HepG2 (cell line): ENCODE measurements at regions of chr19 and their contacts with region 1.

Region 1: DNA sequence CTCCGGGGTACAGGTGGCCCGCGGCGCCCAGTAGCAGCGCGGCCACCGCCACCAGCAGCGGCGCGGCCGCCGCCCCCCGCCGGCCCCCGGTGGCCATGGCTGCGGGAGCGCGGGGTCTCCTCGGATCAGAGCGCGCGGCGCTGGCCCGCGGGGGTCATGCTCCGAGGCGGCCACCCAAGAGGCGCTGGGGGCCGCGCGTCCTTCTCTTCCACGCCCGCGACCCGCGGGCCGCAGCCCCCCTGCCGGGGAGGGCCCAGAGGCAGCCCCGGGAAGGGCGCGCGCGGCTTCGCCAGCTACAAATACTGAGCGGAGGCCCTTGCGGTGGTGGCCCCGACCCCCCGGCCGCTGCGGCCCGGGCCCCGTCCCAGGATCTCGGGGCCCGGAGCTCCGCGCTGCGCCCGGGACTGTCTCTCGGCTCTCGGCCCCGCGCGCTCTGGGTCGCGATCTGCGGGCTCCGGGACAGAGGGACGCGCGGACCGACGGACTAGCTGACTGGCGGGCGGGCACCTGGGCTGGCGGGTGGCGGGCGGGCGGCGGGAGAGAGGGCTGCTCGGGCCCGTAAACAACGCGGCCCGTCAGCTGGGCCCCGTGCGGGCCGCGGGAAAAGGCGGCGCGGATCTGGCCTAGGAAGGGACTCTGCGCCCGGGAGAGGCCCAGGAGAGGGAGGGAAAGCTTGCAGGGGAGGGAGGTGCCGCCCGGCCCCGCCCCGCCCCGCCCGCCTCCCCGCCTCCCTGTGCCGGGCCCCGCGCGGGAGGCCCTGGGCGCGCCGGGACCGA is at the start of gene INSR:
- DNase-seq: peak; percentile 83
- ATAC-seq: peak; percentile 83
- H3K4me3 ChIP-seq: peak within 1 kb of the TSS; percentile 79 to 89 (median 83)
- H3K27ac ChIP-seq: peak within 1 kb of the TSS; percentile 94
- H3K4me1 ChIP-seq: peaks cover 54% of the 10 kb centered on the region
- H3K27me3 ChIP-seq: no peaks in the 10 kb centered on the region; a peak in 1 of 5 replicates
- CTCF ChIP-seq: no peak
- EP300 ChIP-seq: peak in 1 of 2 experiments; percentile 36; a peak in 1 of 4 replicates
- POLR2A ChIP-seq: peak in 1 of 2 experiments; percentile 62; a peak in 2 of 4 replicates
- RAD21 ChIP-seq: no peak
- total RNA-seq, gene INSR: 13.6 and 24.2 TPM in 2 replicates

Region 2: DNA sequence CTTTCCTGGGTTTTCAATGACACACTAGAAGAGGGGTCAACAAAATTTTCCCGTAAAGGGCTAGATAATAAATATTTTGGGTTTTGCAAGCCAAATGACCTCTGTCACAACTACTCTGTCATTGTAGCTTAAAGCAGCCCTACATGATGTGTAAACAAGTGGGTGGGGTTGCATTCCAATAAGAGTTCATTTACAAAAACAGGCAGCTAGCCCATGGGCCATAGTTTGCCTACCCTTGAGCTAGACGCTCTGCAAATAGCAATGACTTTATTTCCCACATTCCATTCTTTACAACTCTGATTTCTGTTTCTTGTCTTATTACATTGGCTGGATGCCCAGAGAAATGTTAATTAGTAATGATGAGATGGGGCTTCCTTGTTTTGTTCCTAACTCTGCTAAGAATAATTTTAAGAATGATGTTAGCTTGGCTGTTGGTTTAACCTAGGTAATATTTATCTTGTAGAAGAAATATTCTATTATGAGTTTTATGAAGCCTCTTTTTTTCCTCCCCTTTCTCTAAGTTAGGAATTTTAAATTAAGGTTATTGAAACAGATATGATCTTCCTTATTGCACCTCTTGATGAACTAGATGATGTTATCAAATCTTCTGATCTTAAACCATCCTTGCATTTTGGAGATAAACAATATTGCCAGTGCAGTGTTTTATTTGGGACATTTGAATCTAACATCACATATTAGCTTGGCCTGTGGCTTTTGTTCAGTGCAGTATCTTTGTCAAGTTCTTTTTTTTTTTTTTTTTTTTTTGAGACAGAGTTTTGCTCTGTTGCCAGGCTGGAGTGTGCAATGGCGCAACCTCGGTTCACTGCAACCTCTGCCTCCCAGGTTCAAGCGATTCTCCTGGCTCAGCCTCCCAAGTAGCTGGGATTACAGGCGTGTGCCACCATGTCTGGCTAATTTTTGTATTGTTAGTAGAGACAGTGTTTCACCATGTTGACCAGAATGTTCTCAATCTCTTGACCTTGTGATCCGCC is 148.2 kb before region 1 on chr19:
- CTCF ChIA-PET with region 1: interaction called, 3 read pairs
- POLR2A ChIA-PET with region 1: no interaction called
- in situ Hi-C with region 1: no loop called
- intact Hi-C with region 1: loop called (anchors 2 kb)
- DNase-seq: peak; percentile 58
- ATAC-seq: no peak; the same call in 2 of the 3 replicates
- H3K4me3 ChIP-seq: no peak overlapping the region
- H3K27ac ChIP-seq: no peak overlapping the region
- H3K4me1 ChIP-seq: no peaks in the 10 kb centered on the region
- H3K27me3 ChIP-seq: no peaks in the 10 kb centered on the region
- CTCF ChIP-seq: no peak
- EP300 ChIP-seq: no peak
- POLR2A ChIP-seq: no peak
- RAD21 ChIP-seq: no peak

Region 3: GRCh38 chr19:7197760-7198696 is 96.0 kb before region 1 on chr19:
- CTCF ChIA-PET with region 1: no interaction called
- POLR2A ChIA-PET with region 1: interaction called, 15 read pairs
- in situ Hi-C with region 1: loop called (anchors 5 kb)
- intact Hi-C with region 1: loop called (anchors 1 kb)
- DNase-seq: peak; percentile 86
- ATAC-seq: peak; percentile 84
- H3K4me3 ChIP-seq: peak overlapping the region; percentile 57 to 79 (median 74)
- H3K27ac ChIP-seq: peak overlapping the region; percentile 79
- H3K4me1 ChIP-seq: peaks cover 60% of the 10 kb centered on the region
- H3K27me3 ChIP-seq: no peaks in the 10 kb centered on the region
- CTCF ChIP-seq: peak; percentile 13; the same call in 1 of the 2 replicates
- EP300 ChIP-seq: 0 out of 4 replicates have a peak, but pooled peaks of 1 of the 2 experiments have one; percentile 18
- POLR2A ChIP-seq: peak; percentile 71 to 84
- RAD21 ChIP-seq: peak; percentile 31; the same call in 1 of the 2 replicates

Region 4: DNA sequence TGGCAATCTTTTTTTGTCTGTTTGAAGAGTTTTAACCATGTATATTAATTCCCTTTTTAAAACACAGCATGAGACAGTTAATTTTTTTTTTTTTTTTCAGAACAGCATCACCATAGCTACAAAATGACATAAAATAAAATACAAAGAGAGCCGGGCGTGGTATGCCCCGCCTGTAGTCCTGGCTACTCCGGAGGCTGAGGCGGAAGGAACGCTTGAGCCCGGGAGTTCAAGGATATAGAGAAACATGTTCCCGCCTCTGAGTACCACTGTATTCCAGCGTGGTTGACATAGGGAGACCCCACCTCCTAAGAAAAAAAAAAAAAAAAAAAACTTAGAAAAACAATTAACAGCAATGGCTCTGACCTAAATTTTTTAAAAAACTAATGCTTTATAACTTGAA is 10.2 kb after region 1 on chr19:
- CTCF ChIA-PET with region 1: no interaction called
- POLR2A ChIA-PET with region 1: no interaction called
- in situ Hi-C with region 1: no loop called
- intact Hi-C with region 1: no loop called
- DNase-seq: no peak
- ATAC-seq: no peak
- H3K4me3 ChIP-seq: no peak overlapping the region
- H3K27ac ChIP-seq: no peak overlapping the region
- H3K4me1 ChIP-seq: no peaks in the 10 kb centered on the region
- H3K27me3 ChIP-seq: no peaks in the 10 kb centered on the region
- CTCF ChIP-seq: no peak
- EP300 ChIP-seq: no peak
- POLR2A ChIP-seq: no peak
- RAD21 ChIP-seq: no peak

Region 5: GRCh38 chr19:7360393-7360984 is 66.5 kb after region 1 on chr19:
- CTCF ChIA-PET with region 1: no interaction called
- POLR2A ChIA-PET with region 1: no interaction called
- in situ Hi-C with region 1: no loop called
- intact Hi-C with region 1: no loop called
- DNase-seq: no peak
- ATAC-seq: no peak
- H3K4me3 ChIP-seq: no peak overlapping the region
- H3K27ac ChIP-seq: no peak overlapping the region
- H3K4me1 ChIP-seq: no peaks in the 10 kb centered on the region
- H3K27me3 ChIP-seq: no peaks in the 10 kb centered on the region
- CTCF ChIP-seq: no peak
- EP300 ChIP-seq: no peak
- POLR2A ChIP-seq: no peak
- RAD21 ChIP-seq: no peak

Region 6: DNA sequence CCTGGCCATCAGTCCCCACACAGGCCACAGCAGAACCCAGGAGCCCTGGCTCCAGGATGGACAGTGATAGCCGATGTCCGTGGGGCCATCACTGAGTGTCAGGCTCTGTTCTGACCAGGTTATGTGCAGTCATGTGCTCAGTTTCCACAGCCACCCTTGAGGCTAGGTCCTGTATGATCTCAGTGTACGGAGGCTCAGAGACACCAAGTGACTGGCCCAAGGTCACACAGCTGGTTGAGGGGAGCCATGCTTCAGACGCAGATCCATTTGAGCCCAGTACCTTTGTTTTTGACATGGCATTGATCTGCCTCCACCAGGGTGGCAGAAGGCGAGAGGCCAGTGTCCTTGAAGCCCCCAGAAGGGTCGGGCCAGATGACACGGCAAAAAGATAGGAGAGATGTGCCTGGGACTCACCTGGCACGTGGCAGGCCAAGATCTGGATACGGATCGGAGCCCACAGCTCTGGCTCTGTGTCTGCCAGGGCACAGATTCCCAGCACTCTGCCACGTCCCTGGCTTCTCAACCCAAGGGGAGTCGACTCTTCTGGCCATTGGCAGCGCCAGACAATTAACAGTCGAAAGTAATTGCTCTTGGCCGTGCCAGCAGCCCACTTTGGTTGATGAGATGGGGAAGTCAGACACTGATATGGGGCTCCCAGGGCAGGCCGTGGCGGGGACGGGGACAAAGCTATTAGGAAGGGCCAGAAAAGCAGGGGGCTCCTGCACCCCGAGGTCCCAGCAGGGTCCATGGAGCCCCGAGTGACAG is 551.6 kb after region 1 on chr19:
- CTCF ChIA-PET with region 1: no interaction called
- POLR2A ChIA-PET with region 1: no interaction called
- in situ Hi-C with region 1: no loop called
- intact Hi-C with region 1: no loop called
- DNase-seq: no peak
- ATAC-seq: no peak
- H3K4me3 ChIP-seq: no peak overlapping the region
- H3K27ac ChIP-seq: no peak overlapping the region
- H3K4me1 ChIP-seq: peaks cover 27% of the 10 kb centered on the region
- H3K27me3 ChIP-seq: peaks cover 0 to 5% of the 10 kb centered on the region in 2 experiments; a peak in 2 of 5 replicates
- CTCF ChIP-seq: no peak
- EP300 ChIP-seq: no peak
- POLR2A ChIP-seq: no peak
- RAD21 ChIP-seq: no peak